CD14-positive monocyte (primary cell): ENCODE measurements at regions of chr11 and their contacts with region 1.

Region 1: GRCh38 chr11:129331871-129332274 is 43.8 kb upstream of the BARX2 start:
- DNase-seq: peak; percentile 51 to 69 (median 68)
- H3K4me3 ChIP-seq: no peak overlapping the region
- H3K4me3 Mint-ChIP-seq: peak overlapping the region; percentile 58 to 89
- H3K27ac ChIP-seq: no peak overlapping the region
- H3K27ac Mint-ChIP-seq: peak overlapping the region in 1 of 7 donors; percentile 45
- H3K4me1 ChIP-seq: peaks cover 10% of the 10 kb centered on the region in 2 donors
- H3K4me1 Mint-ChIP-seq: peaks cover 19% of the 10 kb centered on the region
- H3K27me3 ChIP-seq: no peaks in the 10 kb centered on the region
- H3K27me3 Mint-ChIP-seq: peaks cover 0 to 2% (median 2%) of the 10 kb centered on the region in 3 donors
- CTCF ChIP-seq: peak; percentile 83

Region 2: DNA sequence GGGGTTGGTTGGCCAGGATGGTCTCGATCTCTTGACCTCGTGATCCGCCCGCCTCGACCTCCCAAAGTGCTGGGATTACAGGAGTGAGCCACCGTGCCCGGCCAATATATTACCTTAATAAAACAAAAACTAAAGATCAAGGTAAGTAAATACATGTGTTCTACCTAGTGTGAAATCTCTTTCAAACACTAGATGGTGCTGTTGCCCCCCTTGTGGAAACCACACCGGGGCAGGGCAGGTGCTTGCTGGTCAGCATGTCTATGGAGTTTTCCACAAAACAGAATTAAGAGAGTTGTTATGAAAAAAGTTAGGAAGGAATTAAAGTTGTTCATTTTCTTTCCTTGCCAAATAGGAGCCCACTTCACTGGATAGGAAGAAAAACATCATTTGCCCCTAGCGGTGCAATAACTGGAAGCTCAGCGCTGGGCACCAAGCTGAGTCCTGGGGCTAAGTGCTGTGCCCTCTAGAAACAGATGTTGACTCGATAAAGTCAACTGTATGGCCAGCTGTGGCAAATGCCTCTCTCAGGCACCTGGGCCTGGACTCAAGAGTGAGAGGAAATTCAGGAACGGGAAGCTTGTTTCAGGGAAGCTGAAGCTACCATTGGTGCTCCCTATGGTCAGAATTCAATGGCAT is 447.1 kb before region 1 on chr11:
- intact Hi-C with region 1: loop called in 1 of 2 experiments (anchors 10 kb)
- DNase-seq: peak; percentile 44 to 61 (median 54)
- H3K4me3 ChIP-seq: no peak overlapping the region
- H3K4me3 Mint-ChIP-seq: no peak overlapping the region
- H3K27ac ChIP-seq: no peak overlapping the region
- H3K27ac Mint-ChIP-seq: no peak overlapping the region
- H3K4me1 ChIP-seq: peaks cover 6 to 9% of the 10 kb centered on the region in 2 donors
- H3K4me1 Mint-ChIP-seq: peaks cover 16% of the 10 kb centered on the region
- H3K27me3 ChIP-seq: peaks cover 7 to 16% of the 10 kb centered on the region in 2 donors
- H3K27me3 Mint-ChIP-seq: peaks cover 9 to 23% (median 19%) of the 10 kb centered on the region in 3 donors
- CTCF ChIP-seq: peak; percentile 90

Region 3: GRCh38 chr11:129117595-129118350 is 214.1 kb before region 1 on chr11:
- intact Hi-C with region 1: loop called (anchors 2 to 5 kb)
- DNase-seq: peak; percentile 29 to 53 (median 40)
- H3K4me3 ChIP-seq: no peak overlapping the region
- H3K4me3 Mint-ChIP-seq: no peak overlapping the region
- H3K27ac ChIP-seq: no peak overlapping the region
- H3K27ac Mint-ChIP-seq: no peak overlapping the region
- H3K4me1 ChIP-seq: no peaks in the 10 kb centered on the region
- H3K4me1 Mint-ChIP-seq: no peaks in the 10 kb centered on the region
- H3K27me3 ChIP-seq: no peaks in the 10 kb centered on the region
- H3K27me3 Mint-ChIP-seq: no peaks in the 10 kb centered on the region
- CTCF ChIP-seq: peak; percentile 86

Region 4: DNA sequence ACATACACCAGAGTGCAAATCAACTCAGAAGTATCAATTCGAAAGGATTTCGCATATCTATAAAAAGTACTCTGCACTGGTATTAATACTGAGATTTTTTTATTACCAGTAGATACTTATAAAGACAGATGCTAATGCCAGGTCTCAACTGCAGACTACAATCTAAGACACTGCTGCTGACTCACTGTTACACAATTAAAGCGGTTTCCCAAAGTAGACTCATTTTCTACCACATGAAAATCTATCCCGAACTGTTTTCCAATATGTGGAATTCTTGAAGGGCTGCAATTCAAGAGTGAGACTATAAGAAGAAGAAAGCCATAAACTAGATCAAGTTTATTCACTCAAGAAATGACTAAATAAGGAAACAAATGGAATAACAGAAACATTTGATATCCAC is 82.5 kb before region 1 on chr11:
- intact Hi-C with region 1: no loop called
- DNase-seq: no peak
- H3K4me3 ChIP-seq: no peak overlapping the region
- H3K4me3 Mint-ChIP-seq: no peak overlapping the region
- H3K27ac ChIP-seq: no peak overlapping the region
- H3K27ac Mint-ChIP-seq: peak overlapping the region in 1 of 7 donors; percentile 50
- H3K4me1 ChIP-seq: no peaks in the 10 kb centered on the region
- H3K4me1 Mint-ChIP-seq: peaks cover 8% of the 10 kb centered on the region
- H3K27me3 ChIP-seq: no peaks in the 10 kb centered on the region
- H3K27me3 Mint-ChIP-seq: no peaks in the 10 kb centered on the region
- CTCF ChIP-seq: no peak